Activated CD4-positive, alpha-beta T cell treated with anti-CD3 and anti-CD28 coated beads for 36 hours (primary cell): ENCODE measurements at regions of chr1 and their contacts with region 1.

Region 1: DNA sequence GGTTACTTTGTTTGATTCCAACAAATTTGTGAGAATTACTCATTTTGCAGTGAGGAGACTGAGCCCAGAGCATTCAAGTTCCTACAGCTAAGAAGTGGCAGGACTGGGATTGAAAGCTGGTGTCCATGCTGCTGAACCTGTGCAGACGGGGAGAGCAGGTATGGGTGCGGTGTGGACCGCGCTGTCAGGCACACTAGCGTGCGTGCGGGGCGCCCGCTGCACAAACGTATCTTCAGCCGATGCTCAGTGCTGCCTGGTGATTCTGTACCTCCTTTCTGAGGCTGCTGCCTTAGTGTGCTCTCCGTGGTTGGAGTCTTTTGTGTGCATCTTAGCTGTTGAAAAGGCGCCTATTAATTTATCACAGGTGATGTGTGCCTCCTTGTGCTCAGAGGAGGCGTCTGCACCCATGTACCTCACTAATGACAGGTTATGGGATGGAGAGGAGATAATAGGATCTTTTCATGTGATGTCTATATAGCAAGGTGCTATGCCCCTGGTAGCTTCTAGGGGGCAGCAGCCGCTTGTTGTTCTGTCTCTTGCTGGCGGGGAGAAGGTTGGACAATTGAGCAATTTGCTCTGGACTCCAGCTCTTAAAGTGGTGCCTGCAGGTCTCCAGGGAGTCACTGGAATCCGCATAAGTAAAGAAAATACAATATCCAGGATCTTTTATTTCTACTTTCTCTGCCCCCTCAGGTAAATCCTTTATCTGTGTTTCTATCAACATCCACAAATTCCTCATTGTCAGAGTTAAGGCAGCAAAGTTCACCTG is 32.5 kb downstream of the PEX14 start:
- DNase-seq: peak; percentile 73
- ATAC-seq: peak; percentile 47
- H3K4me3 Mint-ChIP-seq: no peak overlapping the region
- H3K27ac Mint-ChIP-seq: no peak overlapping the region
- H3K4me1 Mint-ChIP-seq: peaks cover 51% of the 10 kb centered on the region
- H3K27me3 Mint-ChIP-seq: no peaks in the 10 kb centered on the region

Region 2: GRCh38 chr1:10170239-10170574 is 337.1 kb before region 1 on chr1:
- CTCF ChIA-PET with region 1: no interaction called
- POLR2A ChIA-PET with region 1: no interaction called
- intact Hi-C with region 1: loop called (anchors 1 to 5 kb)
- DNase-seq: peak; percentile 48
- ATAC-seq: peak; percentile 89
- H3K4me3 Mint-ChIP-seq: peak overlapping the region; percentile 31
- H3K27ac Mint-ChIP-seq: peak overlapping the region; percentile 93
- H3K4me1 Mint-ChIP-seq: peaks cover 46% of the 10 kb centered on the region
- H3K27me3 Mint-ChIP-seq: no peaks in the 10 kb centered on the region

Region 3: DNA sequence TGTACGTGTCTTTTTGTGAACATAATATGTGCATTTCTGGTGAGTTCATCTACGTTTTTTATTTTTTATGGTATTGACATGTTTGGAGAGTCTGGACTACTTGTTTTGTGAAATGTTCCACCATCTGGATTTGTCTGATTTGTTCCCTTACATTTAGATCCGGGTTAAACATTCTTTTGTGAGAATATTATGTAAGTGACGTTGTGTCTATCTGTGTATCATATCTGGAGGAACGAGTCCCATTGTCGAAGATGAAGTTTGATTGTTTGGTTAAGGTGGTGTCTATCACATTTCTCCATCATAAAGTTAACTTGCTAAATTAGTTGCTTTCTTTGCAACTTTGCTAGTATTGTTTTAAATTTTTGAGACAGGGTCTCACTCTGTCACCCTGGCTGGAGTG is 24.5 kb before region 1 on chr1:
- CTCF ChIA-PET with region 1: no interaction called
- POLR2A ChIA-PET with region 1: no interaction called
- intact Hi-C with region 1: no loop called
- DNase-seq: no peak
- ATAC-seq: no peak
- H3K4me3 Mint-ChIP-seq: no peak overlapping the region
- H3K27ac Mint-ChIP-seq: no peak overlapping the region
- H3K4me1 Mint-ChIP-seq: peaks cover 4% of the 10 kb centered on the region
- H3K27me3 Mint-ChIP-seq: no peaks in the 10 kb centered on the region

Region 4: GRCh38 chr1:10494754-10495474 is 12.4 kb before region 1 on chr1:
- CTCF ChIA-PET with region 1: interaction called, 133 read pairs
- POLR2A ChIA-PET with region 1: interaction called, 4 read pairs
- intact Hi-C with region 1: loop called (anchors 1 kb)
- DNase-seq: peak; percentile 90
- ATAC-seq: peak; percentile 87
- H3K4me3 Mint-ChIP-seq: peak overlapping the region; percentile 72
- H3K27ac Mint-ChIP-seq: peak overlapping the region; percentile 91
- H3K4me1 Mint-ChIP-seq: peaks cover 49% of the 10 kb centered on the region
- H3K27me3 Mint-ChIP-seq: no peaks in the 10 kb centered on the region

Region 5: GRCh38 chr1:10561955-10562354 is 54.7 kb after region 1 on chr1:
- CTCF ChIA-PET with region 1: interaction called, 8 read pairs
- POLR2A ChIA-PET with region 1: no interaction called
- intact Hi-C with region 1: loop called in 1 of 2 experiments (anchors 1 kb)
- DNase-seq: peak; percentile 40
- ATAC-seq: peak; percentile 30
- H3K4me3 Mint-ChIP-seq: no peak overlapping the region
- H3K27ac Mint-ChIP-seq: no peak overlapping the region
- H3K4me1 Mint-ChIP-seq: peaks cover 8% of the 10 kb centered on the region
- H3K27me3 Mint-ChIP-seq: no peaks in the 10 kb centered on the region

Region 6: GRCh38 chr1:10796019-10796944 is 289.0 kb after region 1 on chr1 and contains the start of gene CASZ1:
- CTCF ChIA-PET with region 1: no interaction called
- POLR2A ChIA-PET with region 1: no interaction called
- intact Hi-C with region 1: loop called in 1 of 2 experiments (anchors 10 kb)
- DNase-seq: peak; percentile 24
- ATAC-seq: no peak
- H3K4me3 Mint-ChIP-seq: peak within 1 kb of the TSS; percentile 44
- H3K27ac Mint-ChIP-seq: no peak within 1 kb of the TSS
- H3K4me1 Mint-ChIP-seq: peaks cover 11% of the 10 kb centered on the region
- H3K27me3 Mint-ChIP-seq: peaks cover 52% of the 10 kb centered on the region
- total RNA-seq, gene CASZ1: 3.7 to 4.0 TPM

Region 7: DNA sequence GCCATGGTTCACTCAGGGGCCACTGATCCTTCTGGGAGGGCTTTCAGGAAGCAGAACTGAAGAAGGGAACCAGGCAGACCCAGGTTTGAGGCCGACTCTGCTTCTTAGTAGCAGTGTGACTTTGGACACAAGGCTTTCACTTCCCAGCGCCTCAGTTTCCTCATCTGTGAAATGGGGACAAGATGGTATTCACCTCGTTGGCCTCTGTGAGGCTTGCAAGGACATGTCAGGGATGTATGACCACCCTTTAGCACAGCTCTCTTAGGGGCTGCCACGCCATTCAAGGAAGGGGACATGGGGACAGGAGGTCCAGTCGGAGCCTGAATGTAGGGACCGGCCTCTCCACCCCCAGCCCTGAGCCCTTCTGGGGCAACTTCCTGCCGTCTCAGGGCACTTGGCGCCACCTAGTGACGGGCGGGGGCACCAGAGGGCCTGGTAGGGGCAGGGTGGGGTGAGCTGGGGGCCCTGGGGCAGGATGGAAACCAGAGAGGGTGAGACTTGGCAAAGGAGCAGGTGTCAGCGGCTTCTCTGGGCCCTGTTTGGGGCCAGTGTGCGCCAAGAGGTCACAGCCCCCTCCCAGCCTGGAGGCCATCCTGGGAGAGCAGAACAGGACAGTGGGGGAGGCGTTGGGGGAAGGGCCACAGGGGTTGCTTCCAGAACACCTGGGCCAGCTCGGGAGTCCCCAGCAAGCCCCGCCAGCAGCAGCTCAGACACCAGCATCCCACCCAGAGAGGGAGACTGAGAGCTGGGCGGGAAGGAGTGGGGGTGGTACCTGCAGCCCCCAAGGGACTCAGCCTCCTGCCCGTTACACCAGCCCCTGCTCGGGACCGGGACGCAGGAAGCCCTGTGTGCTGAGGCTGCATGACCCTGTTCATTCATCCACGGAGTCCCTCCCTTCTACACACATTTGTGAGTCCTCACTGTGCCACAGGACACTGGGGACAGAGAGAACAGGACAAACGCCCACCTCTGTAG is 402.7 kb after region 1 on chr1:
- CTCF ChIA-PET with region 1: interaction called, 9 read pairs
- POLR2A ChIA-PET with region 1: no interaction called
- intact Hi-C with region 1: loop called in 1 of 2 experiments (anchors 1 kb)
- DNase-seq: peak; percentile 86
- ATAC-seq: peak; percentile 83
- H3K4me3 Mint-ChIP-seq: no peak overlapping the region
- H3K27ac Mint-ChIP-seq: no peak overlapping the region
- H3K4me1 Mint-ChIP-seq: peaks cover 4% of the 10 kb centered on the region
- H3K27me3 Mint-ChIP-seq: peaks cover 7% of the 10 kb centered on the region

Region 8: GRCh38 chr1:10941891-10942541 is 434.7 kb after region 1 on chr1:
- CTCF ChIA-PET with region 1: interaction called, 4 read pairs
- POLR2A ChIA-PET with region 1: no interaction called
- intact Hi-C with region 1: loop called (anchors 1 to 5 kb)
- DNase-seq: peak; percentile 77
- ATAC-seq: no peak
- H3K4me3 Mint-ChIP-seq: no peak overlapping the region
- H3K27ac Mint-ChIP-seq: no peak overlapping the region
- H3K4me1 Mint-ChIP-seq: peaks cover 34% of the 10 kb centered on the region
- H3K27me3 Mint-ChIP-seq: peaks cover 53% of the 10 kb centered on the region